ENCODE measurements at regions of chr3 and their contacts with region 1.

Region 1: GRCh38 chr3:171459942-171460724 is at the start of gene TNIK:
- DNase-seq: peak; percentile 95
- H3K4me3 ChIP-seq: peak within 1 kb of the TSS; percentile 70 to 91 (median 84)
- H3K27ac ChIP-seq: peak within 1 kb of the TSS; percentile 84 to 93 (median 87)
- H3K4me1 ChIP-seq: peaks cover 0 to 38% (median 23%) of the 10 kb centered on the region in 4 donors
- H3K27me3 ChIP-seq: no peaks in the 10 kb centered on the region
- CTCF ChIP-seq: peak in 1 of 4 experiments; percentile 31
- EP300 ChIP-seq: peak in 1 of 4 donors; percentile 17
- POLR2A ChIP-seq: peak in 1 of 2 donors; percentile 42
- total RNA-seq, gene TNIK: 9.2 to 21.3 (median 16.7) TPM

Region 2: DNA sequence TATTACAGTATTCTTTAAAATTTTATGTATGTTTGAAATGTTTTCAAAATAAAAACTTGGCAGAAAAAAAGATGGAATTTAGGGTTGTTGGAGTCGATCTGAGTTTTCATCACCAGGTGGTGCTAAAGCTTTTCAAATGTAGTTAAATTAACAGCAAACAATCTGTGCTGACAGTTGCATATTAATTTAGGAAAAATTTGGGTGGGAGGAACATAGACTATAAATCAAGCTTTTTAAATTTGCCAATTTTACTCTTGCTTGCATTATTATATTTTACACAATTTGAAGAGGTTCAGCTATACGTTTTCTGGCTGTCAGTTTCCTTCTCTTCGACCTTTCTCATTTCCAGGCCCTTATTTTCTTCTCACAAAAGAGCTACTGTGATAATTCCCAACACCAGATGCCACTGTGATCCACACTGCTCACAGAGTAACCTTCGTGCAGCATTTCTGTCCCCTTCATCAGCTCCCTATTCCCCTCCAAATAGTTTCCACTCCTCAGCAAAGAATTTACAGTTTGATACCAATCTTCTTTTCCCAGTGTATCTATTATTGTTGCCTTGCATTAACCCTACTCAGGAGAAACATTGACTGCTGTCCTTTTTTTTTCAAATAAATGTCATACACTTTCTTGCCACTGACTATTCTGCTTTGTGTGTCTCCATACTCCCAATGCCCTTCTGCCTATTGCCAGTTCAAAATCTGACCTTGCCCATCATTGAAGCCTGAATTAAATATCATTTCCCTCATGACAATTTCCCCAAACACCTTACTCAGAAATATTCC is 498.3 kb before region 1 on chr3:
- intact Hi-C with region 1: loop called (anchors 5 kb)
- DNase-seq: no peak
- H3K4me3 ChIP-seq: no peak overlapping the region
- H3K27ac ChIP-seq: no peak overlapping the region
- H3K4me1 ChIP-seq: peaks cover 0 to 7% (median 3%) of the 10 kb centered on the region in 4 donors
- H3K27me3 ChIP-seq: no peaks in the 10 kb centered on the region
- CTCF ChIP-seq: peak; percentile 7 to 58 (median 46)
- EP300 ChIP-seq: no peak
- POLR2A ChIP-seq: no peak

Region 3: GRCh38 chr3:171187706-171188290 is 272.3 kb before region 1 on chr3:
- intact Hi-C with region 1: loop called (anchors 2 kb)
- DNase-seq: no peak
- H3K4me3 ChIP-seq: no peak overlapping the region
- H3K27ac ChIP-seq: no peak overlapping the region
- H3K4me1 ChIP-seq: peaks cover 0 to 20% (median 17%) of the 10 kb centered on the region in 4 donors
- H3K27me3 ChIP-seq: no peaks in the 10 kb centered on the region
- CTCF ChIP-seq: peak; percentile 37 to 53 (median 48)
- EP300 ChIP-seq: no peak
- POLR2A ChIP-seq: no peak

Region 4: DNA sequence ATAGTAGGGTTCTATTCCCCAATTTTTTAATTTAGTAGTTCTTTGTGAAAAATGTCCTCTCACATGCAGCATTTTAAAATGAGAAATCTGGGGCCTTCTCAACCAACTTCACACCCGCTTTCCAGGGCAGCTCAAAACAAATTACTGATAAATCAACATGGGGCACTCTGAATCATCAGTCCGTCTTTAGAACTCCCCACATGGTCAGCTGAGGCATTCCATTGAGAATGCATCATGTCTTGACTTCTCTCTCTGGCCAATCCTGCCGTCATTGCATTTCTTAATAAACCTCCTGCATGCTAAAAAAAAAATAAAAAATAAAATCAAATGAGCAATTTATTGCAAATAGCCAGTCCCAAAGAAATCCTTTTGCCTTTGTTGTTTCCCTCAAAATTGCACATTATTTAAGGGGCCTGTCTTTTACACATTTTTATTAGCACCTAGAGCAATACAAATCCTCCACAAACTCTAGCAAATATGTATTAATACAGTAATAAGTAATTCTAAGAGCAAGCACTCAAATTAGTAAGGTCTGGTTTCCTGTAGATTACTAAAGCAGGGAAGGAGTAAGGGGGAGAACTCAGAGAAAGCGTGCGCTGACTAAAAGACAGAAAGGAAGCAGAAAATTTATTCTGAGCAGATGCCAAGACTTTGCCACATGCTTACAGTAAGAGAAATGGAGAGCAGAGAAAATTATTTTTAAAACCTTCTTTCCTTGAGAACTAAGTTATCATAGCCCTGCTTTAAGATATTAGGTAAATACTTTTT is 175.6 kb before region 1 on chr3:
- intact Hi-C with region 1: loop called (anchors 10 kb)
- DNase-seq: peak; percentile 79
- H3K4me3 ChIP-seq: no peak overlapping the region
- H3K27ac ChIP-seq: peak overlapping the region; percentile 59 to 81 (median 76)
- H3K4me1 ChIP-seq: peaks cover 0 to 65% (median 56%) of the 10 kb centered on the region in 4 donors
- H3K27me3 ChIP-seq: no peaks in the 10 kb centered on the region
- CTCF ChIP-seq: no peak
- EP300 ChIP-seq: no peak
- POLR2A ChIP-seq: no peak

Region 5: DNA sequence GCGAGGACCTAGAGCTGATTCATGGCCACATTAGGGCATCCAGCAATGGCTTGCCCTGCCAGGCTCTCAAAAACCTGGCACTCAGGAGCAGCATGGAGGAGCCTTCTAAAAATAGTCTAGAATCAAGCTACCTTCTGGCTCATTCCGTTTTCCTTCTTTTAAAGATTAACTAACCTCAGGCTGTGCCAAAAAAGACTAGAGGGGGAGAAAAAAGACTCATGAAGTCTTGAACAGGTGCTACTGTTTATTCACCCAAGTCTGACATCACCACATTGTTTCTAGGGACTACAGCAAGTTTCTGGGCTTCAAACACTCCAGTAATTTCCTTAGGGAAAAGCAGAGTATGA is 125.7 kb before region 1 on chr3:
- intact Hi-C with region 1: loop called (anchors 10 kb)
- DNase-seq: peak; percentile 75
- H3K4me3 ChIP-seq: no peak overlapping the region
- H3K27ac ChIP-seq: peak overlapping the region; percentile 54 to 67 (median 58)
- H3K4me1 ChIP-seq: peaks cover 0 to 32% (median 24%) of the 10 kb centered on the region in 4 donors
- H3K27me3 ChIP-seq: no peaks in the 10 kb centered on the region
- CTCF ChIP-seq: no peak
- EP300 ChIP-seq: no peak
- POLR2A ChIP-seq: no peak